ENCODE measurements at regions of chr1 and their contacts with region 1.

Region 1: DNA sequence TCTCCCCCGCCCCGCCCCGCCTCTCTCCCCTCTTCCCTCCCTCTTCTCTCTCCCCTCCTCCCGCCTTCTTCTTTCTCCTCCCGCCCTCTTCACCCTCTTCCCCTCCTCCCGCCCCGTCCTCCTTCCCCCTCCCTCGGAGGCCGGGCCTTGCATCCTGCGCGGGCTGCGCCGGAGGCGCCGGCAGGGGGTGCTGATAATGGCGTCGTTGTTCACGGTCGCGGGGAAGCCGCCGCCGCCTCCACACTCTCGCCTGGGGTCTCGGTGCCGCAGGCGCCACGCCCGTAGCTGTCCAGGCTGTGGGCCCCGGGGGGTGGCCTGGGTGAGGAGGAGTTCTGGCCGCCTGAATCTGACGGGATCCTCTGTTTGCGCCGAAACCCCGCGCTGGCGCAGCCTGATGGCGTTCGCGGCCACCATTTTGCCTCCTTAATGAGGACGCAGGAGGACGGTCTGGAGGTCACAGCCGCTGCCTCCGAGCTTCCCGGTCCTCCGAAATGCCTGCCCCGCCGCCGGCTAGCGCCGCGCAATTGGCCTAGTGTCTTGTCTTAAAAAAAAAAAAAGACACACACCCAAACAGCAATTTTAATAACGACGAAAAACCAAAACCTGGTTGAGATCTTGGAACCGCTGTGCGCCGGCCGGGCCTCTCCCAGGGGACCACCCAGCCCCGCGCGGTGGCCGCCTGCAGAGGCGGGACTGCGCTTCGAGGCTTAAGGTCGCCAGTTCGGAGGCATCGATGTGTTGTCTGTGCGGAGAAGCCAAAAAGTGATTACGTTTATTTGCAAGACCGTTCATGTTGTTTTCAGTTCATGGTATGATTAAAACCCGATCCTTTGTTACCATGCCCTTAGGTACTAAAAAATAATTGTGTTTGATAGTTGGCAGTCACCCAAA is 106.6 kb upstream of the HNRNPU start:
- DNase-seq: peak; percentile 97
- H3K4me3 ChIP-seq: peak overlapping the region; percentile 82 to 89 (median 88)
- H3K27ac ChIP-seq: peak overlapping the region; percentile 96 to 100 (median 100)
- H3K4me1 ChIP-seq: peaks cover 17 to 24% (median 22%) of the 10 kb centered on the region in 4 donors
- H3K27me3 ChIP-seq: peaks cover 0 to 6% (median 0%) of the 10 kb centered on the region in 4 donors
- CTCF ChIP-seq: peak; percentile 51 to 69 (median 51)
- EP300 ChIP-seq: no peak
- POLR2A ChIP-seq: peak; percentile 50

Region 2: GRCh38 chr1:244353551-244354091 is 617.3 kb before region 1 on chr1:
- intact Hi-C with region 1: no loop called
- DNase-seq: no peak
- H3K4me3 ChIP-seq: no peak overlapping the region
- H3K27ac ChIP-seq: peak overlapping the region in 3 of 4 donors; percentile 23 to 54 (median 36)
- H3K4me1 ChIP-seq: peaks cover 0 to 28% (median 18%) of the 10 kb centered on the region in 4 donors
- H3K27me3 ChIP-seq: no peaks in the 10 kb centered on the region
- CTCF ChIP-seq: no peak
- EP300 ChIP-seq: no peak
- POLR2A ChIP-seq: no peak

Region 3: GRCh38 chr1:244652699-244653466 is 318.0 kb before region 1 on chr1 and contains the start of gene DESI2:
- intact Hi-C with region 1: loop called (anchors 5 kb)
- DNase-seq: peak; percentile 99
- H3K4me3 ChIP-seq: peak within 1 kb of the TSS; percentile 72 to 90 (median 78)
- H3K27ac ChIP-seq: peak within 1 kb of the TSS; percentile 95 to 97 (median 97)
- H3K4me1 ChIP-seq: peaks cover 34 to 49% (median 45%) of the 10 kb centered on the region in 4 donors
- H3K27me3 ChIP-seq: no peaks in the 10 kb centered on the region
- CTCF ChIP-seq: peak; percentile 52 to 57 (median 55)
- EP300 ChIP-seq: no peak
- POLR2A ChIP-seq: peak; percentile 95
- total RNA-seq, gene DESI2: 30.3 to 59.6 (median 31.4) TPM

Region 4: GRCh38 chr1:244835276-244836134 is 135.4 kb before region 1 on chr1 and contains the start of gene COX20:
- intact Hi-C with region 1: loop called (anchors 2 kb)
- DNase-seq: peak; percentile 97
- H3K4me3 ChIP-seq: peak within 1 kb of the TSS; percentile 75 to 86 (median 85)
- H3K27ac ChIP-seq: peak within 1 kb of the TSS; percentile 99 to 100 (median 100)
- H3K4me1 ChIP-seq: peaks cover 34 to 51% (median 50%) of the 10 kb centered on the region in 4 donors
- H3K27me3 ChIP-seq: no peaks in the 10 kb centered on the region
- CTCF ChIP-seq: no peak
- EP300 ChIP-seq: no peak
- POLR2A ChIP-seq: peak; percentile 23
- total RNA-seq, gene COX20: 74.8 to 125 (median 101) TPM

Region 5: DNA sequence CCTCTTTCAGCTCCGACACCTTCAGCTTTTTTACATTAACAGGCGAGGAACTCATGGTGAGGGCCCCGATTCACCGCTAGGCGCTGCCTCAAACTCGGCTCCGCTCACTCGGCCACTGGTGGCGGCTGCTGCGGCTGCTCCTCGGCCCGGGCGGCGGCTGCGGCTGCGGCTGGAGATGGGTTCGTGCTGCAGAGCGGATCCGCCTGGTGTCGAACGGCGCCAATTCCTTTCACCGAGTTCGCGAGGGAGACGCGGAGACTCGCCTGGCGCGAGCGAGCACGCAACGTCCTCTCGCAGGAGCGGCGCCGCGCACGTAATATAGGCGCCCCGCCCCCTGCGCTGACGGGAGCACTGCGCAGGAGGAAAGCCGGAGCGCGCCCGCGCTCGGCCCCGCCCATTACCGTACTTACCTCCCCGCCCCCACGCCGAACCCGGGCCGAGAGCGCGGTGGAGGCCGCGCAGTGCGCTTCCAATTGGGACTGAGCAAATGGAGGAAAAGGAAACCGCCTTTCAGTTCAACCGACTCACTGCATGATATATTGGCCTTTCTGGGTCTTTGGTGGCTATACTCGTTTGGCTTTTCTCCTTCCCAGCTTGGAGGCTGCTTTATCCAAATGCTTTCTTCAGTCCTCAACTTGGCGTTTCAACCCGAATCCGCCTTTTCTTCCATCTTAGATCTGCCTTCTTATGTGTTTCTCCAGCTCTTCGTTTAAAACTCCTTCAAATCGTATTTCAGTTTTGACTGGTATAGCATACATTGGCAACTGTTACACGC is 106.5 kb before region 1 on chr1 and contains the start of gene HNRNPU:
- intact Hi-C with region 1: loop called (anchors 2 kb)
- DNase-seq: peak; percentile 98
- H3K4me3 ChIP-seq: peak within 1 kb of the TSS; percentile 97 to 100 (median 99)
- H3K27ac ChIP-seq: peak within 1 kb of the TSS; percentile 100
- H3K4me1 ChIP-seq: peaks cover 30 to 48% (median 44%) of the 10 kb centered on the region in 4 donors
- H3K27me3 ChIP-seq: no peaks in the 10 kb centered on the region
- CTCF ChIP-seq: peak in 2 of 3 experiments; percentile 27 to 36
- EP300 ChIP-seq: peak; percentile 90
- POLR2A ChIP-seq: peak; percentile 97
- total RNA-seq, gene HNRNPU: 255 to 306 (median 279) TPM

Region 6: DNA sequence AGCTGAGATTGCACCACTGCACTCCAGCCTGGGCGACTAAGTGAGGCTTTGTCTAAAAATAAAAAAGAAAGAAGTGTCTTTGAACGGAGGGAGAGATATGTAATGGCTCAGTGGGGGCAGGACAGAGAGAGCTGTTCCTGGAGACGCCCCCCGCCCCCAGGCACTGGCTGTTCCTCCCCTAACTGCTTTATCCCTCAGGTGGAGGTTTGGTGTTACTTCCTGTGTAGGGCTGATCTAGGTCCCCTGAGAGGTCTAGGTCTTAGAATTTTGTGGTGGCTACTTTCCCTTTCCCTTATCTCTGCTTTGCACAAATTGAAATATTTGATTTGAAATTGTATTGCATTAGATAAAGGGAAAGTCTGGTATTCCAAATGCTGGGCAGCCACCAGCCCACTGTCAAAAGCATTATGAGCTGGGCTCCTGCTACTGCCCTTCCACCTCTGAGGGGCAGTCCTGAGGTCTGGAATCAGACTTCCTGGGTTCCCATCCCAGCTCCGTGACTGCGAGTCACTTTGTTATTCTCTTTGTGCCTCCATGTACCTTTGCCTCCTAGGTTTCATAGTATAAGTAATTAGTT is 49.1 kb after region 1 on chr1:
- intact Hi-C with region 1: no loop called
- DNase-seq: no peak
- H3K4me3 ChIP-seq: no peak overlapping the region
- H3K27ac ChIP-seq: no peak overlapping the region
- H3K4me1 ChIP-seq: no peaks in the 10 kb centered on the region
- H3K27me3 ChIP-seq: no peaks in the 10 kb centered on the region
- CTCF ChIP-seq: no peak
- EP300 ChIP-seq: no peak
- POLR2A ChIP-seq: no peak

Measured in esophagus muscularis mucosa (tissue), 4 donors.